Activated CD4-positive, alpha-beta memory T cell treated with anti-CD3 and anti-CD28 coated beads, Interleukin-2, amount 10 ng/mL, durations not matched to agents 7 days and 5 days (primary cell): ENCODE measurements at regions of chr6 and their contacts with region 1.

Region 1: DNA sequence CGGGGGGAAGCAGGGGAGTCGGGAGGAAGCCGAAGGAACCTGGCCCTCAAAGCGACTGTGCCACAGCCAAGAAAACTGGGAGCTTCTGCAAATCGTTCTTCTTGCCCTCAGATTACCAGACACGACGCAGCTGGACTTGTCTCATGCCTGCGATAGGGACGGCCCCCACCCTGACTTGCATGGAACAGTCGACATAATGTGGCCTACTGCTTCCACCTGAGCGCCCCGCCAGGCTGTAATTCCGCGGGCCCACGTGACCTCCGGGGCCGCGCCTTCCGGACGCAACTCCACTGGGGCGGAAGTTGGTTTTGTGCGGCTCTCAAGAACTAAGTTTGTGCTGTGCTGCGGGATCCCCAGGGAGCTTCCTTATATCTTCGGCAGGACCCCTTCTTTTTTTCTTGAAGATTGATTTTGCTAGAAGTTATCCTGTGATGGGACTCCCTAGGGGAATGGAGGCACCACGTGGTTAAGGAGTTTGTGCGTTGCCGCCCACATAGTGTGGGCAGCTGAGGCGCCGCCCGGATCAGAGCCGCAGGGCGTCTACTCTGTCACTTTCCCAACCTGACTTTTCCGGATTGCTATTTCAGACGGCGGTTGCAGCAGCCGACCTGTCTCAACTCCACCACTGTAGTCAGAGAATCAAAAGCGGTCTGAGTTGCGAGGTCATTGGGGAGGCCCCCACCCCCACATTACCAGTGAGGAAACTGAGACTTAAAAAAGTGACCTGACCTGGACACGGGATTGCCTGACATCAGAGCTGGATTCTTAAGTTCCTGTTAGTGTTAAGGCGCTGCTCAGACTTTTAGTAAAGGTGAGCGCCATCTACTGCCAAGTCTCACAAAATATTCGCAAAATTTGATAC is 540 bp upstream of the CD164 start:
- DNase-seq: peak; percentile 94
- H3K4me3 Mint-ChIP-seq: peak overlapping the region; percentile 93
- H3K27ac Mint-ChIP-seq: peak overlapping the region; percentile 99
- H3K4me1 Mint-ChIP-seq: peaks cover 28% of the 10 kb centered on the region
- H3K27me3 Mint-ChIP-seq: peaks cover 3% of the 10 kb centered on the region

Region 2: GRCh38 chr6:109187399-109188114 is 195.2 kb before region 1 on chr6:
- CTCF ChIA-PET with region 1: interaction called, 96 read pairs
- POLR2A ChIA-PET with region 1: interaction called, 40 read pairs
- DNase-seq: peak; percentile 64
- H3K4me3 Mint-ChIP-seq: no peak overlapping the region
- H3K27ac Mint-ChIP-seq: no peak overlapping the region
- H3K4me1 Mint-ChIP-seq: peaks cover 1% of the 10 kb centered on the region
- H3K27me3 Mint-ChIP-seq: peaks cover 43% of the 10 kb centered on the region

Region 3: GRCh38 chr6:109332748-109333147 is 50.1 kb before region 1 on chr6:
- CTCF ChIA-PET with region 1: no interaction called
- POLR2A ChIA-PET with region 1: no interaction called
- DNase-seq: no peak
- H3K4me3 Mint-ChIP-seq: no peak overlapping the region
- H3K27ac Mint-ChIP-seq: no peak overlapping the region
- H3K4me1 Mint-ChIP-seq: peaks cover 6% of the 10 kb centered on the region
- H3K27me3 Mint-ChIP-seq: no peaks in the 10 kb centered on the region

Region 4: GRCh38 chr6:109397020-109397419 is 14.2 kb after region 1 on chr6:
- CTCF ChIA-PET with region 1: interaction called, 26 read pairs
- POLR2A ChIA-PET with region 1: interaction called, 17 read pairs
- DNase-seq: no peak
- H3K4me3 Mint-ChIP-seq: no peak overlapping the region
- H3K27ac Mint-ChIP-seq: no peak overlapping the region
- H3K4me1 Mint-ChIP-seq: peaks cover 5% of the 10 kb centered on the region
- H3K27me3 Mint-ChIP-seq: peaks cover 1% of the 10 kb centered on the region

Region 5: GRCh38 chr6:109455502-109456282 is 72.9 kb after region 1 on chr6 and contains the start of gene MICAL1:
- CTCF ChIA-PET with region 1: interaction called, 19 read pairs
- POLR2A ChIA-PET with region 1: interaction called, 124 read pairs
- DNase-seq: peak; percentile 84
- H3K4me3 Mint-ChIP-seq: peak within 1 kb of the TSS; percentile 97
- H3K27ac Mint-ChIP-seq: peak within 1 kb of the TSS; percentile 98
- H3K4me1 Mint-ChIP-seq: peaks cover 78% of the 10 kb centered on the region
- H3K27me3 Mint-ChIP-seq: no peaks in the 10 kb centered on the region
- total RNA-seq, gene MICAL1: 125 to 128 TPM

Region 6: GRCh38 chr6:109491207-109491938 is 108.6 kb after region 1 on chr6:
- CTCF ChIA-PET with region 1: interaction called, 15 read pairs
- POLR2A ChIA-PET with region 1: interaction called, 40 read pairs
- DNase-seq: peak; percentile 56
- H3K4me3 Mint-ChIP-seq: peak overlapping the region; percentile 41
- H3K27ac Mint-ChIP-seq: peak overlapping the region; percentile 92
- H3K4me1 Mint-ChIP-seq: peaks cover 35% of the 10 kb centered on the region
- H3K27me3 Mint-ChIP-seq: peaks cover 5% of the 10 kb centered on the region

Region 7: DNA sequence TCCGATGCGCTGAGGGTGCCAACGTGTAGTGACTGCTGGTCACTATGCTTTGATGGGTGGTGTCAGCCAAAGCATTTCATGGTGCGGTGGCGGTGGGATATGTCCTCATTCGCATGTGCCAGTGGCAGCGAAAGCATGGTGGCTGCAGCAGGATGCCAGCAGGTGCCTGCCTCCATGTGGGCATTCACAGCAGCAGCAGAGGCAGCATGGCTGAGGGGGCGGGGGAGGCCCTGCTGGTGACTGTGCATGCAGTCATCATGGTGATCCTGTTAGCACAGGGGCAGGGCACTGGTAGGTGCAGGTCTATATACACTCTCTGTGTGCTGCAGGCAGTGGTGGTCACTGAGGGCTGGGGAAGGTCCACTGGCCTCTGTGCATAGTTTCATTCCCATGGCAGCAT is 330.3 kb after region 1 on chr6:
- CTCF ChIA-PET with region 1: no interaction called
- POLR2A ChIA-PET with region 1: no interaction called
- DNase-seq: no peak
- H3K4me3 Mint-ChIP-seq: no peak overlapping the region
- H3K27ac Mint-ChIP-seq: no peak overlapping the region
- H3K4me1 Mint-ChIP-seq: no peaks in the 10 kb centered on the region
- H3K27me3 Mint-ChIP-seq: no peaks in the 10 kb centered on the region